ENCODE measurements at regions of chr6 and their contacts with region 1.

Region 1: GRCh38 chr6:42726485-42727086 is 4.2 kb upstream of the PRPH2 start:
- DNase-seq: peak; percentile 20 to 87 (median 80)
- ATAC-seq: peak; percentile 99
- H3K4me3 ChIP-seq: peak overlapping the region; percentile 84
- H3K4me3 Mint-ChIP-seq: peak overlapping the region; percentile 76 to 96 (median 90)
- H3K27ac ChIP-seq: peak overlapping the region; percentile 74
- H3K27ac Mint-ChIP-seq: peak overlapping the region; percentile 89 to 99 (median 98)
- H3K4me1 ChIP-seq: peaks cover 6 to 14% of the 10 kb centered on the region in 2 donors
- H3K4me1 Mint-ChIP-seq: peaks cover 9 to 25% (median 20%) of the 10 kb centered on the region in 7 donors
- H3K27me3 ChIP-seq: no peaks in the 10 kb centered on the region
- H3K27me3 Mint-ChIP-seq: peaks cover 0 to 1% (median 0%) of the 10 kb centered on the region in 5 donors

Region 2: GRCh38 chr6:41970436-41970846 is 756.1 kb before region 1 on chr6:
- CTCF ChIA-PET with region 1: no interaction called
- POLR2A ChIA-PET with region 1: no interaction called
- intact Hi-C with region 1: no loop called
- DNase-seq: peak in 1 of 9 donors; percentile 44
- ATAC-seq: peak; percentile 93
- H3K4me3 ChIP-seq: no peak overlapping the region
- H3K4me3 Mint-ChIP-seq: peak overlapping the region; percentile 38 to 81 (median 61)
- H3K27ac ChIP-seq: peak overlapping the region; percentile 38
- H3K27ac Mint-ChIP-seq: peak overlapping the region; percentile 61 to 94 (median 76)
- H3K4me1 ChIP-seq: peaks cover 11 to 53% of the 10 kb centered on the region in 2 donors
- H3K4me1 Mint-ChIP-seq: peaks cover 35 to 98% (median 77%) of the 10 kb centered on the region in 7 donors
- H3K27me3 ChIP-seq: no peaks in the 10 kb centered on the region
- H3K27me3 Mint-ChIP-seq: no peaks in the 10 kb centered on the region

Region 3: DNA sequence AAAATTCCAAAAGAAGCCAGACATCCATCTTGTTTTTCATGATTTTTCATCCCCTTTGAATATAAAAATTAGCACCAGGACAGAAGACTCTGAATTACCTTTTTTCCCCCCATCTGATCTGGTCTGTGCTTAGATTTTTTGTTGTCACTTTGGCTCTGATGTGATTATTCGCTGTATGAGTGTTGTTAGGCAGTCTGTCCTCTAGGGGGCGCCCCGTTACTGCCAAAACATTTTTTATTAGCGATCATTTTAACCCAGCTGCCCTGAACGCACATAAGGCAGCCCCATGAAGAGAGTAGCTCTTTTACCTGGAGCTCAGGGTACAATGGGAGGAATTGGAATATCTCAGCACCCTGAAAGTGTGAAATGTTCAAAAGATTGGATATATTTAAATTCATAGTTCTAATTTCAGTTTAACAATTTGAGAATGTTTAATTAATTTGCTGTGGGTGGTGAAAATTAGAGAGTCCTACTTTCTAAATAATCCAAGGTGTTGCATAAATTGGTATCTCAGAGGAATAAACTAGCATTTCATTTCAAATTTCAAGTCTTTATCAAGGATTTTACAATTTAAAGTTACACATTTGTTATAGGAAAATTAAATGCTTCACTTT is 64.9 kb before region 1 on chr6:
- CTCF ChIA-PET with region 1: interaction called, 42 read pairs
- POLR2A ChIA-PET with region 1: interaction called, 25 read pairs
- intact Hi-C with region 1: loop called (anchors 1 kb)
- DNase-seq: peak; percentile 73 to 89 (median 81)
- ATAC-seq: peak; percentile 99
- H3K4me3 ChIP-seq: no peak overlapping the region
- H3K4me3 Mint-ChIP-seq: no peak overlapping the region
- H3K27ac ChIP-seq: no peak overlapping the region
- H3K27ac Mint-ChIP-seq: peak overlapping the region in 8 of 9 donors; percentile 0 to 59 (median 26)
- H3K4me1 ChIP-seq: no peaks in the 10 kb centered on the region
- H3K4me1 Mint-ChIP-seq: peaks cover 0 to 6% (median 0%) of the 10 kb centered on the region in 7 donors
- H3K27me3 ChIP-seq: no peaks in the 10 kb centered on the region
- H3K27me3 Mint-ChIP-seq: no peaks in the 10 kb centered on the region

Region 4: DNA sequence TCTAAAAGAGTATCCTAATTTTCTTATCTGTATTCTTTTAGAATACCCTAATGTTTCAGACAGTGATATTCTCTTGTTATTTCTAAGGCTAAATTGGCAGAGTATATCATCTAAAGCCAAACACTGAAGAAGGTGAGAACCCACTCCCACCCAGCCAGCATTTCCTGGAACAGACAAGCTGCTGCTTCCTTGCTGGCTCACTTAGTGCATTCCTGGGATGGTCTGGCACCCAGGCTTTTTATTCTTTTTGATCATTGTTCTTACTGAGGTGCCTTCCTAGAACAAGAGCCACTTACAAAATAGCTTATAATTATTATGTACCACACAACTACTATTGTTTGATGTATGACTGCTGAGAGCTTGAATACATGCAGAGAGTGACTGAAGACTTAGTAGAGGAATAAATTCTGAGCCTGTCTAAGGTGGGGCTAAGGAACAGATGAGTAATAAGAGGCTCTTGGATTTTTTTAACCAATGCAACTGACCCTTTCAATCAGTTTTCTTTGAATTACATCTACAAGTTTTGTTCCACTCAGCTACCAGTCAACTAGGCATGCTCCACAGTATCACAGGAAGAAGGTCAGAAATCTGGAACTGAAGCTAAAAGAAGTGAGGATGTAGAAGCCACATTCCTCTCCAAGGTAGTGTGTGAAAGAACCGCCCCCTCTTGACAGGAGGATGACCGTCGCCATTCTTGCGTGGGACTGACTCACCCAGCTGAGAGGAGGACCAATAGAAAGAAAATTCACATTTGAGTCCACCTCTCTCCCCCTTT is 34.3 kb before region 1 on chr6:
- CTCF ChIA-PET with region 1: interaction called, 9 read pairs
- POLR2A ChIA-PET with region 1: interaction called, 5 read pairs
- intact Hi-C with region 1: loop called (anchors 1 kb)
- DNase-seq: no peak
- ATAC-seq: no peak
- H3K4me3 ChIP-seq: no peak overlapping the region
- H3K4me3 Mint-ChIP-seq: no peak overlapping the region
- H3K27ac ChIP-seq: no peak overlapping the region
- H3K27ac Mint-ChIP-seq: peak overlapping the region; percentile 39 to 87 (median 77)
- H3K4me1 ChIP-seq: peaks cover 10 to 16% of the 10 kb centered on the region in 2 donors
- H3K4me1 Mint-ChIP-seq: peaks cover 19 to 60% (median 40%) of the 10 kb centered on the region in 7 donors
- H3K27me3 ChIP-seq: no peaks in the 10 kb centered on the region
- H3K27me3 Mint-ChIP-seq: no peaks in the 10 kb centered on the region

Region 5: GRCh38 chr6:42782622-42783176 is 56.1 kb after region 1 on chr6:
- CTCF ChIA-PET with region 1: interaction called, 9 read pairs
- POLR2A ChIA-PET with region 1: interaction called, 1,628 read pairs
- intact Hi-C with region 1: loop called (anchors 1 to 5 kb)
- DNase-seq: peak in 8 of 9 donors; percentile 65 to 88 (median 82)
- ATAC-seq: peak; percentile 75
- H3K4me3 ChIP-seq: peak overlapping the region; percentile 89
- H3K4me3 Mint-ChIP-seq: peak overlapping the region in 8 of 10 donors; percentile 89 to 100 (median 98)
- H3K27ac ChIP-seq: peak overlapping the region; percentile 100
- H3K27ac Mint-ChIP-seq: peak overlapping the region in 5 of 9 donors; percentile 99 to 100 (median 100)
- H3K4me1 ChIP-seq: peaks cover 36 to 45% of the 10 kb centered on the region in 2 donors
- H3K4me1 Mint-ChIP-seq: peaks cover under 1 to 35% (median 30%) of the 10 kb centered on the region in 7 donors
- H3K27me3 ChIP-seq: no peaks in the 10 kb centered on the region
- H3K27me3 Mint-ChIP-seq: no peaks in the 10 kb centered on the region